ENCODE measurements at regions of chr13 and their contacts with region 1.

Region 1: GRCh38 chr13:99656092-99656745 is 154.9 kb downstream of the TM9SF2 start:
- DNase-seq: peak; percentile 74
- H3K4me3 Mint-ChIP-seq: peak overlapping the region; percentile 57
- H3K27ac Mint-ChIP-seq: peak overlapping the region; percentile 9
- H3K4me1 Mint-ChIP-seq: peaks cover 44% of the 10 kb centered on the region
- H3K27me3 Mint-ChIP-seq: peaks cover 23% of the 10 kb centered on the region

Region 2: DNA sequence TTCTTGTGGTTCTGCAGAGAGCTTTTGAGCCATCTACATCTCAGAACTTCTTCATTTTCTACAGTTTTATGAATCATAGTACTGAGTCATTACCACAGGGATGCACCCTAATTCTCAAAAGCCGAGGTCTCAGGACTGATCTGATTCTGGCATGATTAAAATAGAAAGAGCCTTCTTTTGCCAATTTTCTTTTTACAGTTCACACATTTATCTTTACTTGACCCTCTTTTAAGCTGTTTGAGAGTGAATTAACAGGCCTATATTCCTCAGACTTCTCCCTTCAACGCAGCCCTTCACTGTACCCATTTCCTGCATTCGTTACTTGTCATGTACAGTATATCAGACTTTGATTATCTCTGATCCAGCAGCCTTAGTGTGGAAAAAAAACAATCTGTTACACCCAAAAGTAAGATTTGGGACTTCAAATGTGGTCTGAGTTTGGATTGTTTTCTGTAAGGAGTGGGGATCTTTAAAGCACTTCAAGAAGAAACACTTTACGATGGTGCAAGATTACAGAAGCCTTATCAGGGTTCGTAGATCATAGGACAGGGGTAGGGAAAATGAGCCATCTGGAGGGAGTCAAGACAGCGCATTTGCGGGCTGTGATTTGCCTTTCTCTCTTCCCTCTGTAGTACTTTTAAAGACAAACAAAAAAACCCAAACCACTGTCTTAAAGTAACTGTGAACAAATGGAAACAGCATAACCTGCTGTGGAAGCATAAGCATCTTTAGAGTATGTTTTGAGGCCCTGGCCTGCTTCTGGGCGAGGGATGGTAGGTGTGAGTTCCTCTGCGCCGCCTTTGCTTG is 333.7 kb before region 1 on chr13:
- intact Hi-C with region 1: loop called (anchors 2 kb)
- DNase-seq: no peak
- H3K4me3 Mint-ChIP-seq: peak overlapping the region; percentile 38
- H3K27ac Mint-ChIP-seq: peak overlapping the region; percentile 96
- H3K4me1 Mint-ChIP-seq: peaks cover 68% of the 10 kb centered on the region
- H3K27me3 Mint-ChIP-seq: no peaks in the 10 kb centered on the region

Region 3: GRCh38 chr13:99859178-99860177 is 203.3 kb after region 1 on chr13:
- intact Hi-C with region 1: loop called (anchors 2 kb)
- DNase-seq: peak; percentile 12
- H3K4me3 Mint-ChIP-seq: no peak overlapping the region
- H3K27ac Mint-ChIP-seq: peak overlapping the region; percentile 76
- H3K4me1 Mint-ChIP-seq: peaks cover 13% of the 10 kb centered on the region
- H3K27me3 Mint-ChIP-seq: peaks cover 64% of the 10 kb centered on the region

Region 4: GRCh38 chr13:99979453-99980200 is 323.4 kb after region 1 on chr13:
- intact Hi-C with region 1: loop called (anchors 5 kb)
- DNase-seq: no peak
- H3K4me3 Mint-ChIP-seq: no peak overlapping the region
- H3K27ac Mint-ChIP-seq: no peak overlapping the region
- H3K4me1 Mint-ChIP-seq: peaks cover 16% of the 10 kb centered on the region
- H3K27me3 Mint-ChIP-seq: peaks cover 67% of the 10 kb centered on the region

Region 5: GRCh38 chr13:100340865-100341264 is 684.6 kb after region 1 on chr13:
- intact Hi-C with region 1: loop called (anchors 5 kb)
- DNase-seq: no peak
- H3K4me3 Mint-ChIP-seq: no peak overlapping the region
- H3K27ac Mint-ChIP-seq: no peak overlapping the region
- H3K4me1 Mint-ChIP-seq: peaks cover 27% of the 10 kb centered on the region
- H3K27me3 Mint-ChIP-seq: peaks cover 2% of the 10 kb centered on the region

Region 6: GRCh38 chr13:100542826-100543156 is 886.6 kb after region 1 on chr13:
- intact Hi-C with region 1: loop called (anchors 1 kb)
- DNase-seq: no peak
- H3K4me3 Mint-ChIP-seq: no peak overlapping the region
- H3K27ac Mint-ChIP-seq: no peak overlapping the region
- H3K4me1 Mint-ChIP-seq: peaks cover 19% of the 10 kb centered on the region
- H3K27me3 Mint-ChIP-seq: peaks cover 3% of the 10 kb centered on the region